ENCODE measurements at regions of chr16 and their contacts with region 1.

Region 1: DNA sequence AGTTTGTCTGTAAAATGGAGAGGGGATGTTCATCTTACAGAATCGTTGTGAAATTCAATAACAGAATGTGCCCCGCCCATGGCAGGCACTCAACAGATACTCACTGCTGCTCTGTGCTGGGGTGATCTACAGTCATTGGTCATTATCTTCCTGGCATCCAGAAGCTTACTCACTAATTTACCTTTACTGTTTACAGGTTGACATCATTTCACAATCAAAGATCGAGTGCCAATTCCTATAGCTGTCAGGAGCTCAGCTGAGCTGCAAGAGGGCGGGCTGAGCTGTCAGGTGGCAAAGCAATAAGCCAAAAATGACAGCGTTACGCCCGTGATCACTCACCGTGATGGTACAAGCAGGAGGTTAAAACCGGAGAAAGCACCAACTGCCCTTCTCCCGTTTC is 51.2 kb downstream of the LITAF start:
- DNase-seq: no peak
- ATAC-seq: no peak
- H3K4me3 ChIP-seq: no peak overlapping the region
- H3K27ac ChIP-seq: no peak overlapping the region
- H3K4me1 ChIP-seq: no peaks in the 10 kb centered on the region; a peak in 1 of 5 replicates
- H3K27me3 ChIP-seq: peaks cover 14 to 49% of the 10 kb centered on the region in 2 experiments; a peak in 4 of 5 replicates
- CTCF ChIP-seq: no peak
- EP300 ChIP-seq: no peak
- POLR2A ChIP-seq: no peak
- RAD21 ChIP-seq: no peak

Region 2: GRCh38 chr16:11639925-11640899 is 104.7 kb after region 1 on chr16:
- CTCF ChIA-PET with region 1: interaction called, 20 read pairs
- POLR2A ChIA-PET with region 1: no interaction called
- in situ Hi-C with region 1: no loop called
- intact Hi-C with region 1: loop called (anchors 1 kb)
- DNase-seq: peak in 3 of 4 experiments; percentile 10 to 23 (median 22)
- ATAC-seq: peak; percentile 46
- H3K4me3 ChIP-seq: no peak overlapping the region
- H3K27ac ChIP-seq: no peak overlapping the region
- H3K4me1 ChIP-seq: peaks cover 0 to 10% of the 10 kb centered on the region in 2 experiments; a peak in 3 of 5 replicates
- H3K27me3 ChIP-seq: peaks cover 6 to 45% of the 10 kb centered on the region in 2 experiments; a peak in 4 of 5 replicates
- CTCF ChIP-seq: no peak
- EP300 ChIP-seq: peak; percentile 3
- POLR2A ChIP-seq: no peak
- RAD21 ChIP-seq: no peak

Region 3: GRCh38 chr16:11658894-11659708 is 123.6 kb after region 1 on chr16:
- CTCF ChIA-PET with region 1: no interaction called
- POLR2A ChIA-PET with region 1: interaction called, 3 read pairs
- in situ Hi-C with region 1: no loop called
- intact Hi-C with region 1: loop called (anchors 5 kb)
- DNase-seq: no peak
- ATAC-seq: no peak
- H3K4me3 ChIP-seq: no peak overlapping the region
- H3K27ac ChIP-seq: no peak overlapping the region
- H3K4me1 ChIP-seq: peaks cover 0 to 4% of the 10 kb centered on the region in 2 experiments; a peak in 1 of 5 replicates
- H3K27me3 ChIP-seq: peaks cover 30 to 60% of the 10 kb centered on the region in 2 experiments
- CTCF ChIP-seq: no peak
- EP300 ChIP-seq: no peak
- POLR2A ChIP-seq: no peak
- RAD21 ChIP-seq: no peak

Region 4: GRCh38 chr16:11715246-11715947 is 179.9 kb after region 1 on chr16:
- CTCF ChIA-PET with region 1: interaction called, 5 read pairs
- POLR2A ChIA-PET with region 1: no interaction called
- in situ Hi-C with region 1: no loop called
- intact Hi-C with region 1: loop called (anchors 1 kb)
- DNase-seq: no peak
- ATAC-seq: no peak
- H3K4me3 ChIP-seq: no peak overlapping the region
- H3K27ac ChIP-seq: no peak overlapping the region
- H3K4me1 ChIP-seq: no peaks in the 10 kb centered on the region
- H3K27me3 ChIP-seq: no peaks in the 10 kb centered on the region
- CTCF ChIP-seq: no peak
- EP300 ChIP-seq: no peak
- POLR2A ChIP-seq: no peak
- RAD21 ChIP-seq: no peak

Region 5: DNA sequence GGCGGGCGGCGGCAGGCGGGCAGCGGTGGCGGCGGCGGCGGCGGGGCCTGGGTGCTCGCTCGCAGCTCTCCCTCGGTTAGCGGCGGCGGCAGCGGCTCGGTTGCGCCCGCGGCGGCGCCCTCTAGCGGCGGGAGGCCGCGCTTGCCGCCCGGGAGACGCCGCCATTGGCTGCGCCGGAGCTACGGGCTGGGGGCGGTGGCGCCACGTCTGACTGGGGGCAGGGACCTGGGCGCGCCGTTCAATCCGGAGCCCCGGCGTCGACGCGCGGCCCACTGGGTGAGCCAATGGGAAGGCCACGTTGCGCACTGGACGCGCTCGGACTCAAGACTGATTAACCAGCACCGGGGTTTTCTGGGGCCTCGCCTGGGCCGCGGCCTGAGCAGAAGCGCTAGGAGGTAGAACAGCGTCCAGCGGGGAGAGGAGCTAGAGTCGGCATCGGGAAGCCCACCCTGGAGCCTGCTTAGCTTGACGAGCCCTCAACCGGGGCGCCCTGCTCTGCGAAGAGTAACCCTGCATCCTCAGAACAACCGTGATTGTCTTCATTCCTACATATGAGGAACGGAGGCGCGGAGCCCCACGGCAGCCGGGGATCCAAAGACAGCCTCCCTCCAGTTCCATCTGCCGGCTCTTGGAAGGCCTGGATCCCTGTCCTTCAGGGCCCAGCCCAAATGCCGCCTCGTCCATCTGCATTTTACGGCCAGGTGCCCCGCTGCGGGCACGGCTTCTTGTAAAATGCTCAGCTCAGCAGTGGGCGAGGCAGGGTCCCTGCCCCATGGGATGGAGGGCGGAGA is 261.9 kb after region 1 on chr16 and contains the start of gene ZC3H7A:
- CTCF ChIA-PET with region 1: no interaction called
- POLR2A ChIA-PET with region 1: interaction called, 4 read pairs
- in situ Hi-C with region 1: loop called (anchors 10 kb)
- intact Hi-C with region 1: no loop called
- DNase-seq: peak; percentile 96 to 98 (median 96)
- ATAC-seq: peak; percentile 96
- H3K4me3 ChIP-seq: peak within 1 kb of the TSS; percentile 76
- H3K27ac ChIP-seq: peak within 1 kb of the TSS; percentile 94
- H3K4me1 ChIP-seq: peaks cover 50 to 55% of the 10 kb centered on the region in 2 experiments
- H3K27me3 ChIP-seq: no peaks in the 10 kb centered on the region
- CTCF ChIP-seq: peak; percentile 45 to 75 (median 56); a peak in 5 of 6 replicates
- EP300 ChIP-seq: no peak; the same call in 1 of the 2 replicates
- POLR2A ChIP-seq: peak; percentile 96
- RAD21 ChIP-seq: no peak
- polyA plus RNA-seq, gene ZC3H7A: 22.5 to 23.1 TPM

Region 6: GRCh38 chr16:11819798-11820197 is 284.3 kb after region 1 on chr16:
- CTCF ChIA-PET with region 1: no interaction called
- POLR2A ChIA-PET with region 1: no interaction called
- in situ Hi-C with region 1: no loop called
- intact Hi-C with region 1: loop called (anchors 10 kb)
- DNase-seq: peak in 3 of 4 experiments; percentile 14 to 66 (median 33)
- ATAC-seq: peak; percentile 94
- H3K4me3 ChIP-seq: no peak overlapping the region
- H3K27ac ChIP-seq: 0 out of 3 replicates have a peak overlapping the region, but pooled peaks have one; percentile 29
- H3K4me1 ChIP-seq: peaks cover 0 to 12% of the 10 kb centered on the region in 2 experiments; a peak in 1 of 5 replicates
- H3K27me3 ChIP-seq: no peaks in the 10 kb centered on the region; a peak in 2 of 5 replicates
- CTCF ChIP-seq: no peak
- EP300 ChIP-seq: no peak
- POLR2A ChIP-seq: no peak
- RAD21 ChIP-seq: no peak

Measured in K562 (cell line).